ENCODE measurements at regions of chr2 and their contacts with region 1.

Region 1: GRCh38 chr2:136117909-136118818 is at the start of gene CXCR4:
- DNase-seq: peak; percentile 89 to 98 (median 94)
- ATAC-seq: peak; percentile 29
- H3K4me3 ChIP-seq: peak within 1 kb of the TSS; percentile 87
- H3K4me3 Mint-ChIP-seq: peak within 1 kb of the TSS; percentile 99
- H3K27ac ChIP-seq: peak within 1 kb of the TSS; percentile 85 to 96
- H3K27ac Mint-ChIP-seq: peak within 1 kb of the TSS; percentile 97
- H3K4me1 ChIP-seq: peaks cover 28% of the 10 kb centered on the region
- H3K4me1 Mint-ChIP-seq: peaks cover 72% of the 10 kb centered on the region
- H3K27me3 ChIP-seq: no peaks in the 10 kb centered on the region
- H3K27me3 Mint-ChIP-seq: peaks cover 28% of the 10 kb centered on the region
- CTCF ChIP-seq: no peak
- total RNA-seq, gene CXCR4: 1,661 to 1,739 TPM

Region 2: DNA sequence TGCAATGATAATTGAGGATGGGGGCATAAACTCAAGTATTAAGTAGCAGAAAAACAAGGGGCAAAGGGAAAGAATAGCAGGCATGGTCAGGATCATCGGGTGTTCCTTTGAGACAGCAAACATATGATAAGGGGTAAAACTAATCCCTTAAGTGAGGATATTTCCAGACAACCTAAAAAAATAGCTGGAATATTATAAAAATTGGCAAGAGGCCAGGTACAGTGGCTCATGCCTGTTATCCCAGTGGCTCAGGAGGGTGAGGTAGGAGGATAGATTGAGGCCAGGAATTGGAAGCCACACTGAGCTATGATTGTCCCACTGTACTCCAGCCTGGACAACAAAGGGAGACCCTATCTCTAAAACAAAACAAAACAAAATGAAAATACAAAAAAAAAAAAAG is 726.2 kb before region 1 on chr2:
- CTCF ChIA-PET with region 1: no interaction called
- POLR2A ChIA-PET with region 1: no interaction called
- intact Hi-C with region 1: no loop called
- DNase-seq: no peak
- ATAC-seq: no peak
- H3K4me3 ChIP-seq: no peak overlapping the region
- H3K4me3 Mint-ChIP-seq: no peak overlapping the region
- H3K27ac ChIP-seq: no peak overlapping the region
- H3K27ac Mint-ChIP-seq: no peak overlapping the region
- H3K4me1 ChIP-seq: no peaks in the 10 kb centered on the region
- H3K4me1 Mint-ChIP-seq: no peaks in the 10 kb centered on the region
- H3K27me3 ChIP-seq: no peaks in the 10 kb centered on the region
- H3K27me3 Mint-ChIP-seq: no peaks in the 10 kb centered on the region
- CTCF ChIP-seq: no peak

Region 3: GRCh38 chr2:135960656-135961551 is 157.3 kb before region 1 on chr2:
- CTCF ChIA-PET with region 1: no interaction called
- POLR2A ChIA-PET with region 1: interaction called, 5 read pairs
- intact Hi-C with region 1: loop called in 1 of 2 experiments (anchors 5 kb)
- DNase-seq: peak in 8 of 14 experiments; percentile 7 to 61 (median 28)
- ATAC-seq: peak; percentile 81
- H3K4me3 ChIP-seq: peak overlapping the region; percentile 6
- H3K4me3 Mint-ChIP-seq: peak overlapping the region; percentile 65
- H3K27ac ChIP-seq: peak overlapping the region; percentile 56 to 58
- H3K27ac Mint-ChIP-seq: peak overlapping the region; percentile 92
- H3K4me1 ChIP-seq: peaks cover 18% of the 10 kb centered on the region
- H3K4me1 Mint-ChIP-seq: peaks cover 63% of the 10 kb centered on the region
- H3K27me3 ChIP-seq: no peaks in the 10 kb centered on the region
- H3K27me3 Mint-ChIP-seq: no peaks in the 10 kb centered on the region
- CTCF ChIP-seq: no peak

Region 4: DNA sequence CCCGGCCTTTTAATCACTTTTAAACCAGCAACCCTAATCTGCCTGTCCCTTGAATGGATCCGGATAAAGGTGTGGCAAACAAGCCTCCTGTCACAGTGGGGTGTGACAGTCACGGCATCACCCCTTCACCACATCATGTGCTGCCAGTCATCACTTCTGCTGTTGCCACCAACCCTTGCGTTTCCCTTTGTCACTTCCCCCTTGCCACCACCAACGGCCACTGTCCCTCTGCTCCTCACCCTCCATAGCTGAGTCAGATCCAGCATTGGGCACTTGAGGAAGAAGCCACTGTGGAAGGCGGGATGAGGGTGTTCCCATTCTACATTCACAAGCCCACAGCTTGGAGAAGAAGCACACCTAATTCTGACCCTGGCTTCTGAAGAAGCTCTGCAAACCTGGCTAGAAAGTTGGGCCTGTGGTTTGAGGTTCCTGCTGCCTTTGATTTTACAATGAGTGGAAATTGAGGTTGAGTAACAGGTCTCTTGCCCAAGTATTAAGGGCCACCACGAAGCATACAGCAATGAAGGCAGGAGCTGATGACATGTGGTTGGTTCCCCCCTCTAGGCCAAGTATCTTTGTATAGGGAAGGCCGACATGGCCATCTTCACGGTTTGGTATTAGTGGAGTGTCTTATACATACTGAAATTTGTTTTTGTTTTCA is 109.8 kb before region 1 on chr2:
- CTCF ChIA-PET with region 1: no interaction called
- POLR2A ChIA-PET with region 1: interaction called, 4 read pairs
- intact Hi-C with region 1: loop called in 1 of 2 experiments (anchors 5 kb)
- DNase-seq: peak; percentile 30 to 90 (median 50)
- ATAC-seq: peak; percentile 97
- H3K4me3 ChIP-seq: no peak overlapping the region
- H3K4me3 Mint-ChIP-seq: no peak overlapping the region
- H3K27ac ChIP-seq: peak overlapping the region in 1 of 2 donors; percentile 29
- H3K27ac Mint-ChIP-seq: peak overlapping the region; percentile 75
- H3K4me1 ChIP-seq: peaks cover 25% of the 10 kb centered on the region
- H3K4me1 Mint-ChIP-seq: peaks cover 33% of the 10 kb centered on the region
- H3K27me3 ChIP-seq: no peaks in the 10 kb centered on the region
- H3K27me3 Mint-ChIP-seq: no peaks in the 10 kb centered on the region
- CTCF ChIP-seq: no peak

Region 5: GRCh38 chr2:136129601-136130000 is 11.4 kb after region 1 on chr2:
- CTCF ChIA-PET with region 1: interaction called, 11 read pairs
- POLR2A ChIA-PET with region 1: interaction called, 488 read pairs
- intact Hi-C with region 1: loop called (anchors 1 kb)
- DNase-seq: peak in 8 of 14 experiments; percentile 32 to 91 (median 62)
- ATAC-seq: peak; percentile 41
- H3K4me3 ChIP-seq: no peak overlapping the region
- H3K4me3 Mint-ChIP-seq: peak overlapping the region; percentile 77
- H3K27ac ChIP-seq: peak overlapping the region; percentile 94 to 99
- H3K27ac Mint-ChIP-seq: peak overlapping the region; percentile 97
- H3K4me1 ChIP-seq: peaks cover 100% of the 10 kb centered on the region
- H3K4me1 Mint-ChIP-seq: peaks cover 96% of the 10 kb centered on the region
- H3K27me3 ChIP-seq: no peaks in the 10 kb centered on the region
- H3K27me3 Mint-ChIP-seq: no peaks in the 10 kb centered on the region
- CTCF ChIP-seq: no peak

Region 6: GRCh38 chr2:136238286-136239078 is 120.3 kb after region 1 on chr2:
- CTCF ChIA-PET with region 1: interaction called, 5 read pairs
- POLR2A ChIA-PET with region 1: interaction called, 33 read pairs
- intact Hi-C with region 1: loop called in 1 of 2 experiments (anchors 2 kb)
- DNase-seq: peak; percentile 31 to 87 (median 46)
- ATAC-seq: peak; percentile 80
- H3K4me3 ChIP-seq: no peak overlapping the region
- H3K4me3 Mint-ChIP-seq: peak overlapping the region; percentile 2
- H3K27ac ChIP-seq: peak overlapping the region; percentile 68 to 75
- H3K27ac Mint-ChIP-seq: peak overlapping the region; percentile 83
- H3K4me1 ChIP-seq: peaks cover 49% of the 10 kb centered on the region
- H3K4me1 Mint-ChIP-seq: peaks cover 58% of the 10 kb centered on the region
- H3K27me3 ChIP-seq: no peaks in the 10 kb centered on the region
- H3K27me3 Mint-ChIP-seq: no peaks in the 10 kb centered on the region
- CTCF ChIP-seq: no peak

Region 7: DNA sequence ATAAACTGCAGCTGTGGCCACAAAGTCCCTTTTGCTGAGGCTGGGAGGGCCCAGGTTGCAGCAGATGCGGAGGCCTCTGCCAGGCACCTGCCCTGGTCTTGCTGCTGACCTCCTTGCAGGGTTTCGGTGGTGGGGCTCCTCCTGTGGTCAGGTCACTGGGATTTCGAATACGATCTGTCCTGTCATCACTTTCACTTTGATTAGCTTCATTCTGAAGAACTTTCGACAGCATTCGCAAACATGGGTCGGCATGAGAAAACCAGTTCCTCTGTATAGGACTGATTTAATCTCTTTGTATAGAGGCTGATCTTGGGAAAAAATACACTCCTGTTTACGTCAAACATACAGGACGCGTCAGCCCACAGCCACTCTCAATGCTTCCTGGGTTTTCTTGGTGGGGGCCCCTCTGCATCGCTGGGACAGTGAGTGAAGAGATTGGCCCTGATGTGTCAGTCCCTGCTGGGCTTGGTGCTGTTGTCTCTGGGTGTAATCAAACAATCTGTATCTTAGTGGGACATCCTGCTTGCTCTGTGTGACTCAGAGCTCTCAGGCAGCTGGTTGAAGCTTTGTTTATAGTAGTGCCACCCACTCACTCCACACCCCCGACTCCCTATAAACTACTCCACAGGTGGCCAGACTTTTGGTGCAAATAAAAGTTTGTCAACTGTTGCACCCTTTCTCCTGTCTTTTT is 209.1 kb after region 1 on chr2:
- CTCF ChIA-PET with region 1: interaction called, 5 read pairs
- POLR2A ChIA-PET with region 1: interaction called, 15 read pairs
- intact Hi-C with region 1: loop called (anchors 1 to 5 kb)
- DNase-seq: peak; percentile 64 to 93 (median 78)
- ATAC-seq: peak; percentile 92
- H3K4me3 ChIP-seq: peak overlapping the region; percentile 44
- H3K4me3 Mint-ChIP-seq: peak overlapping the region; percentile 79
- H3K27ac ChIP-seq: peak overlapping the region; percentile 74 to 90
- H3K27ac Mint-ChIP-seq: peak overlapping the region; percentile 90
- H3K4me1 ChIP-seq: peaks cover 54% of the 10 kb centered on the region
- H3K4me1 Mint-ChIP-seq: peaks cover 64% of the 10 kb centered on the region
- H3K27me3 ChIP-seq: no peaks in the 10 kb centered on the region
- H3K27me3 Mint-ChIP-seq: no peaks in the 10 kb centered on the region
- CTCF ChIP-seq: no peak

Region 8: DNA sequence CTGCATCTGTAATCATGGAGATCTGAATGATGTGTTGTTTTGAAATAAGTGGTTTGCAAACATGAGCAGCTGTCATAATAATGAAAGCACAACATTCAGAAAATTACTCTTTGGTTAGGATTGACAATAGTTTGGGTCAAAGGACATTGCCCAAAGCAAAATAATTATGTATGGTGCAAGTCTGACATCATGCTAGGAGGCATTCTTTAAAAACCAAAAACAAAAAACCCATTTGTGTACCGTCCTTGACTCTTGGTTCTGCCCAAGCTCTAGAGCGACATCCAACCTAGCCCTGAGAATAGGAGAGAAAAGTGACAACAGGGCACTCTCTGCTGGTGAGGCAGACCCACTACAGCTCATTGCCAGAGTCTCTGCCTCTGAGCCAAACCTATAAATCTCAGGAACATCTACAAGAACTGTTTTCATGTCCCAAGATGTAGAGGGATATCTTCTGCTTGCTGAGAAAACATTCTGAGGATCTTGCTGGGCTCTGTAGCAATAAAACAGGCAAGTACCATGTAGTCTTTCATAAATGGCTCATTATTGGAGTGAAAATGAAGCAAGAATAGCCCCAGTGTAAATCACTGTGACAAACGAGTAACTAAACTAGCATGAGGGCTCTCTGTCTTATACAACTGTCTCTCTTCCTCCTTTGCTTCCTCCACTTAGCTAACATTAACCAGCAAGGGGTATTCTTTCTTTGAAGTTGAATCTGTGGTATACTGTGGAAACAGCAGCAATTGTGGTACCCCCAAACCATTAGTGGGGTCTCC is 266.6 kb after region 1 on chr2:
- CTCF ChIA-PET with region 1: interaction called, 3 read pairs
- POLR2A ChIA-PET with region 1: interaction called, 4 read pairs
- intact Hi-C with region 1: loop called in 1 of 2 experiments (anchors 1 kb)
- DNase-seq: peak; percentile 27 to 83 (median 46)
- ATAC-seq: peak; percentile 57
- H3K4me3 ChIP-seq: no peak overlapping the region
- H3K4me3 Mint-ChIP-seq: no peak overlapping the region
- H3K27ac ChIP-seq: no peak overlapping the region
- H3K27ac Mint-ChIP-seq: peak overlapping the region; percentile 79
- H3K4me1 ChIP-seq: peaks cover 24% of the 10 kb centered on the region
- H3K4me1 Mint-ChIP-seq: peaks cover 37% of the 10 kb centered on the region
- H3K27me3 ChIP-seq: no peaks in the 10 kb centered on the region
- H3K27me3 Mint-ChIP-seq: no peaks in the 10 kb centered on the region
- CTCF ChIP-seq: peak; percentile 67

Region 9: GRCh38 chr2:136495636-136496035 is 377.5 kb after region 1 on chr2:
- CTCF ChIA-PET with region 1: no interaction called
- POLR2A ChIA-PET with region 1: no interaction called
- intact Hi-C with region 1: no loop called
- DNase-seq: no peak
- ATAC-seq: no peak
- H3K4me3 ChIP-seq: no peak overlapping the region
- H3K4me3 Mint-ChIP-seq: no peak overlapping the region
- H3K27ac ChIP-seq: no peak overlapping the region
- H3K27ac Mint-ChIP-seq: no peak overlapping the region
- H3K4me1 ChIP-seq: no peaks in the 10 kb centered on the region
- H3K4me1 Mint-ChIP-seq: no peaks in the 10 kb centered on the region
- H3K27me3 ChIP-seq: peaks cover 7 to 11% of the 10 kb centered on the region in 2 experiments
- H3K27me3 Mint-ChIP-seq: peaks cover 42% of the 10 kb centered on the region
- CTCF ChIP-seq: no peak

Measured in CD4-positive, alpha-beta T cell (primary cell).